Natural killer cell (primary cell): ENCODE measurements at regions of chr12 and their contacts with region 1.

Region 1: GRCh38 chr12:68317047-68317667 is 15.0 kb downstream of the MDM1 start:
- DNase-seq: peak in 1 of 2 donors; percentile 81
- ATAC-seq: peak in 1 of 3 donors; percentile 41
- H3K4me3 ChIP-seq: no peak overlapping the region
- H3K4me3 Mint-ChIP-seq: no peak overlapping the region
- H3K27ac ChIP-seq: no peak overlapping the region
- H3K27ac Mint-ChIP-seq: no peak overlapping the region
- H3K4me1 ChIP-seq: no peaks in the 10 kb centered on the region
- H3K4me1 Mint-ChIP-seq: no peaks in the 10 kb centered on the region
- H3K27me3 ChIP-seq: no peaks in the 10 kb centered on the region
- H3K27me3 Mint-ChIP-seq: no peaks in the 10 kb centered on the region
- CTCF ChIP-seq: peak; percentile 87

Region 2: DNA sequence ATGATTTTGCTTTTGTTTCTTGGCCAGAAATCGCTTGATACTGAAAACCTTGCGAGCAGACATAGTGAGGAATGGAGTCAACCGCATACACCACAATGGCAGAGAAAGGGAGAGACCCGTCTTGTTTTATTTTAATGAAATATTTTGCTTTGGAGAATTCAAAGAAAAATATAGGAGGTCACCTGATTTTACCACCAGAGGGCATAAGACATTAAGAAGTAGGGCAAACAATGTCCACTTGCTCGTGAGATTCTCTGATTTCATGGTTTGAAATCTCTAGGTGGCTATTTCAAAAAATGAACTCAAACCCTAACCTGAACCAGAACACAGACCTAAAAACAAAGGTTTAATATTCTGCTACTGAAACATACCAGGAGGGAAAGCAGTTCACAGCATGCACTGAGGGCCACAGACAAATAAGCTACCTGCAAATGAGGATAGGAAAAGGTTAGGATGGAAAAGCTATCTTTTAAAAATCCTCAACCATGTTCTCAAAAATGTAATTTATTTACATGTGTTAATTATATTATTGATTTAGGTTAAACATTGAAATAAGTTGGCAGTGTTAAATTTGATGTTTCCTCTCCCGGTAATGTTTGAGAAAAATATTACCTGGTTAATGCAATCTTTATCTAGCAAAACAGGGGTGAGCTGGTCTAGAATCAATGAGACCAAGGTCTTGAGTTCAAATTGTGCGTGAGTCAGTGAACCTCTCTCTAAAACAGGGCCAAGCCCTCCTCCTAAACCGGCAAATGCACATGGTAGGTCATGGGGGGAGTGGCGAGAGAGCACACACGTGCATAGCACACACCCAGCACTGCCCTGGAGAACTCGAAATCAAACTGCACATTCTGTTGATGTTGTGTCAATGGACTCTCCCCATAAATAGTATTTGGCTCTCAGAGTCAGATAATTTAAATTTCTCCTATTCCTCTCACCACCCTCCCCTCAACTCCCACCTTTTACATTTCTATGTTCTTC is 315.4 kb before region 1 on chr12:
- intact Hi-C with region 1: loop called (anchors 2 kb)
- DNase-seq: peak in 1 of 2 donors; percentile 36
- ATAC-seq: no peak
- H3K4me3 ChIP-seq: no peak overlapping the region
- H3K4me3 Mint-ChIP-seq: no peak overlapping the region
- H3K27ac ChIP-seq: no peak overlapping the region
- H3K27ac Mint-ChIP-seq: no peak overlapping the region
- H3K4me1 ChIP-seq: no peaks in the 10 kb centered on the region
- H3K4me1 Mint-ChIP-seq: no peaks in the 10 kb centered on the region
- H3K27me3 ChIP-seq: no peaks in the 10 kb centered on the region
- H3K27me3 Mint-ChIP-seq: peaks cover under 1 to 3% of the 10 kb centered on the region in 2 donors
- CTCF ChIP-seq: no peak

Region 3: GRCh38 chr12:68040450-68041075 is 276.6 kb before region 1 on chr12:
- intact Hi-C with region 1: loop called (anchors 1 kb)
- DNase-seq: peak; percentile 57 to 87
- ATAC-seq: peak; percentile 77 to 80 (median 78)
- H3K4me3 ChIP-seq: no peak overlapping the region
- H3K4me3 Mint-ChIP-seq: no peak overlapping the region
- H3K27ac ChIP-seq: no peak overlapping the region
- H3K27ac Mint-ChIP-seq: peak overlapping the region in 1 of 2 donors; percentile 40
- H3K4me1 ChIP-seq: peaks cover 24% of the 10 kb centered on the region
- H3K4me1 Mint-ChIP-seq: peaks cover 31 to 41% of the 10 kb centered on the region in 2 donors
- H3K27me3 ChIP-seq: no peaks in the 10 kb centered on the region
- H3K27me3 Mint-ChIP-seq: peaks cover 8 to 10% of the 10 kb centered on the region in 2 donors
- CTCF ChIP-seq: peak; percentile 94

Region 4: DNA sequence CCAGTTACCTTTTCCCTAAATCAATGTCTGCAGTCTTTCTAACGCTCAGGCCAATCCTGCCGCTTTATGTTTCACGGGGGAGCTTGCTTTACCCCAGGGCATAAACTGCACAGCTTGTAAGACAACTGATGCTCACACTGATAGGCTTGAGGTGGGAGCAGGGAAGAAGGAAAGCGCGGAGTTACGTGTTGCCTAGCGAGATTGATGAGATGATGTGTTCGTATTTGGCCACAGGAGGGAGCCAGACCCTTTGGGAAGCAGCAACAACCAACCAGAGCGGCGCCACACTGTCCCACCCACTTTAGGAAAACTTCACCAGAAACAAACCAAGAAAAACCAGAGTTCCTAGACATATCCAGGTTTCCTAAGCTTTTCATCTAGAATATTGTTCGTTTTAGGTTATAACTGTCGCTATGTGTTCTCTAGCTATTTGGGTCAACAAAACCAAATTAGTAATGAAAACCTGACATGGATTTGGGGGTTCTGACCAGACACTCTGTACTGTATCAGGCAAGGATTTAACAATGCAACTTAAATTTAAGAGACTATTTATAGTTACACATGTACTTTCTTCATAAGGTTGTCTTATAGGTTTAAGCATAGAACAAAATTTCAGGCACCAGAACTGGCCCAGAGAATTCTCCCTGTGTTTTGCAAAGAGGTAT is 93.9 kb before region 1 on chr12:
- intact Hi-C with region 1: loop called (anchors 1 kb)
- DNase-seq: peak; percentile 53 to 91
- ATAC-seq: peak; percentile 95 to 100 (median 99)
- H3K4me3 ChIP-seq: no peak overlapping the region
- H3K4me3 Mint-ChIP-seq: no peak overlapping the region
- H3K27ac ChIP-seq: no peak overlapping the region
- H3K27ac Mint-ChIP-seq: peak overlapping the region in 1 of 2 donors; percentile 32
- H3K4me1 ChIP-seq: peaks cover 4% of the 10 kb centered on the region
- H3K4me1 Mint-ChIP-seq: peaks cover 6 to 7% of the 10 kb centered on the region in 2 donors
- H3K27me3 ChIP-seq: no peaks in the 10 kb centered on the region
- H3K27me3 Mint-ChIP-seq: peaks cover 13 to 27% of the 10 kb centered on the region in 2 donors
- CTCF ChIP-seq: peak; percentile 80

Region 5: GRCh38 chr12:68595241-68595640 is 278.1 kb after region 1 on chr12:
- intact Hi-C with region 1: no loop called
- DNase-seq: no peak
- ATAC-seq: no peak
- H3K4me3 ChIP-seq: no peak overlapping the region
- H3K4me3 Mint-ChIP-seq: no peak overlapping the region
- H3K27ac ChIP-seq: no peak overlapping the region
- H3K27ac Mint-ChIP-seq: peak overlapping the region in 1 of 2 donors; percentile 16
- H3K4me1 ChIP-seq: peaks cover 33% of the 10 kb centered on the region
- H3K4me1 Mint-ChIP-seq: peaks cover 38 to 46% of the 10 kb centered on the region in 2 donors
- H3K27me3 ChIP-seq: no peaks in the 10 kb centered on the region
- H3K27me3 Mint-ChIP-seq: no peaks in the 10 kb centered on the region
- CTCF ChIP-seq: no peak